Right cardiac atrium (tissue), 5 donors: ENCODE measurements at regions of chr5 and their contacts with region 1.

Region 1: DNA sequence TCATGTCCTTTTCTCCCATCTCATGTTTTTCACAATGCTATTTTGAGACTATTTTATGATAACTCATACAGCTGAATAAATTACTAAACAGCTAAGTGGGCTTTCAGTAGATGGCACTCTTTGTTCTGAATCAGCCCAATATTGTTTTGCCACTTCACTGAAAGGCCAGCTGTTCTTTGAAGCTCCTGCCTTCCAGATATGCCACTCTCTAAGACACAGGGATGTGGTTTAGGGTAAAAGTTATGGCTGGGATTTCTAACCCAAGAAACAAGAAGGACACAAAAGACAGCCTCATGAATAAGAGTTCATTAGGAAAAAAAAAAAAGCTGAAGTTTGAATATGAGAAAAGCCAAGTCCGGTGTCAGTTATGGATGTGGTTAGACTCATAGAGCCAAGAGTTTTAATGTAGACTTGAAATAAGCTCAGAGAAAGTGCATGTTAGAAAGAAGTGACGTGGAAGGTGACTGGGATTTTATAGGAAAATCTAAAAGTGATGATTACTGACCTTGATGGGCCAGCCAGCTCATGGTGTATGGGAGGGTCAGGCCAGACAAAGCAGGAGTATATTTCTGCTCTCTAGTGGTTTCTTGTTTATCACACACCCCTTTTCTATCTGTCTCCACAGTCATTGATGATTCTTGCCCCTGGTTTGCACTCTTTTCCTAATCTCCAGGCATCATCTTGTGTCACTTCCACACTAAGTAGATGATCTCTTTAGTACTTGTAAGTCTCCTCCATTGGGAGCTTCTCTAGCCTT is 488.5 kb downstream of the NR2F1-AS1 start:
- DNase-seq: no peak
- ATAC-seq: peak in 1 of 2 donors; percentile 66
- H3K4me3 ChIP-seq: no peak overlapping the region
- H3K27ac ChIP-seq: no peak overlapping the region
- H3K4me1 ChIP-seq: no peaks in the 10 kb centered on the region
- H3K27me3 ChIP-seq: no peaks in the 10 kb centered on the region

Region 2: GRCh38 chr5:92879806-92880543 is 212.6 kb before region 1 on chr5:
- intact Hi-C with region 1: no loop called
- DNase-seq: no peak
- ATAC-seq: no peak
- H3K4me3 ChIP-seq: no peak overlapping the region
- H3K27ac ChIP-seq: no peak overlapping the region
- H3K4me1 ChIP-seq: no peaks in the 10 kb centered on the region
- H3K27me3 ChIP-seq: no peaks in the 10 kb centered on the region

Region 3: GRCh38 chr5:93249651-93250289 is 157.2 kb after region 1 on chr5:
- intact Hi-C with region 1: loop called in 1 of 4 experiments (anchors 10 kb)
- DNase-seq: peak; percentile 18 to 44 (median 44)
- ATAC-seq: peak; percentile 57 to 76
- H3K4me3 ChIP-seq: peak overlapping the region; percentile 44
- H3K27ac ChIP-seq: peak overlapping the region; percentile 86
- H3K4me1 ChIP-seq: no peaks in the 10 kb centered on the region
- H3K27me3 ChIP-seq: no peaks in the 10 kb centered on the region

Region 4: GRCh38 chr5:93582677-93583438 is 490.3 kb after region 1 on chr5 and contains the start of gene NR2F1:
- intact Hi-C with region 1: loop called in 1 of 4 experiments (anchors 10 kb)
- DNase-seq: peak; percentile 79 to 83 (median 82)
- ATAC-seq: peak; percentile 70 to 79
- H3K4me3 ChIP-seq: peak within 1 kb of the TSS; percentile 94
- H3K27ac ChIP-seq: peak within 1 kb of the TSS; percentile 61
- H3K4me1 ChIP-seq: no peaks in the 10 kb centered on the region
- H3K27me3 ChIP-seq: no peaks in the 10 kb centered on the region
- total RNA-seq, gene NR2F1: 22.1 to 59.2 (median 42.6) TPM

Region 5: GRCh38 chr5:94081088-94081487 is 988.6 kb after region 1 on chr5:
- intact Hi-C with region 1: no loop called
- DNase-seq: no peak
- ATAC-seq: no peak
- H3K4me3 ChIP-seq: no peak overlapping the region
- H3K27ac ChIP-seq: no peak overlapping the region
- H3K4me1 ChIP-seq: peaks cover 5% of the 10 kb centered on the region
- H3K27me3 ChIP-seq: no peaks in the 10 kb centered on the region